ENCODE measurements at regions of chrX and their contacts with region 1.

Region 1: GRCh38 chrX:101287402-101287801 is 3.7 kb downstream of the TAF7L start:
- DNase-seq: peak; percentile 71
- H3K4me3 Mint-ChIP-seq: no peak overlapping the region
- H3K27ac Mint-ChIP-seq: no peak overlapping the region
- H3K4me1 Mint-ChIP-seq: no peaks in the 10 kb centered on the region
- H3K27me3 Mint-ChIP-seq: peaks cover 4% of the 10 kb centered on the region

Region 2: DNA sequence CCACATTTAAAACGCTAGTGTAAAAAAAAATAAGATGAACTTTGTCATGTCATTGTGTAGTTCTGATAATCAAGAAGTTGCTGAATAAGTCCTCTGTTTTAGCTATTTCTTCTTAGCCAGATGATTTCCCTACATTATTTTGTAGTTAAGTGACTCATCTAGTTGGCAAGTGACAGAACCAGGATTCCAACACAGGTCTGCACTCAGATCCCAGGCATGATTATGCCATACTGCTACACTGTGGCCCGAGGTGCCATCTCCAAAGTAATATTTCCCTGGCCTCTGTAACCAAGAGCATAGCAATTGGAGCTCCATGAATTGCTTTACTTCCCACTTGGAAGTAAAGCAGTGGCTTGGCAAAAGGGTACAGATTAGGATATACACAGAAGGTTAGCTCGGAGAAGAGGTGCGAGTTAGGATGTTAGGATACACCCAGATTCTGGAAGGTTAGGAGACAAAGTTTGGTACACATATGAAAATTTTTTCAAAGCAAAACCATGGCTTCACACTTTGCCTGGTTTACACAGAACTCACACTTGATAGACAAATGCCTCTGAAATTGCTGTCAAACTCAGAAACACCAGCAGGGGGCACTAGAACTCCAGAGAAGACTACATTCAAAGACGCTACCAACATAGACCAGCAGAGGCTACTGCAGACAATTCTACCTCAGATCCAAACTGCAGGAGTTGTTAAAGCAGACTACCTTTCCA is 602.0 kb before region 1 on chrX:
- intact Hi-C with region 1: loop called (anchors 5 kb)
- DNase-seq: peak; percentile 87
- H3K4me3 Mint-ChIP-seq: no peak overlapping the region
- H3K27ac Mint-ChIP-seq: no peak overlapping the region
- H3K4me1 Mint-ChIP-seq: peaks cover 8% of the 10 kb centered on the region
- H3K27me3 Mint-ChIP-seq: peaks cover 5% of the 10 kb centered on the region

Region 3: DNA sequence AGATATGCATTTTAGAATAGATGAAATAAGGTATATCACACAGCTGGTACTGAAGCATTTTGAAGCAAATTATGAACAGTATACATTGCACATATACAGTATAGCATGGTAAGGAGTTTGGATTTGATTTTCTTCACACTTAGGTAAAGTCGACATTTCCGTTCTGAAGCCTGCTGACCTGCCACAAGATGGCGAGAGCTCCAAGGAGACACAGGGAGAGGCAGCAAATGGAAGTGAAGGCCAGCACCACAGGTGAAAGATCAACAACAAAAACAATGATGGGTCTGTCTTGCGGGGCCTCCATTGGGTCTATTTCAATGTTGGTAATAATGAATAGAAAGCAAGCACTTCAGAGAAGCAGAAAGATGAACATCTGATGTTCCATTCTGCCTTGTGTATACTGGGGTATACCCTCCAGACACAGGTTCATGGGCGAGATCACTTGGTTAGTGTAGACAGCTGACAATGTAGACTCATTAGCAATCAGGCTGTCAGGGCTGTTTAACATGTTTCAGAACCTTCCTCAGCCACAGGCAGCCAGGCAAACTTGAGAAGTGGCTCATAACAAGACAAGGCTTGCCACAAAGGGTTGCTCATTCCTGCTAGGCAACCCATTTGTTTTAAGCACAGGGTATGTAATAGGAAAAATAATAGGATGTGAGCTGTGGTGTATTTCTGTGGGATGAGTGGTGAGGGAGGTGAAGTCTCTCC is 391.9 kb before region 1 on chrX:
- intact Hi-C with region 1: loop called (anchors 2 kb)
- DNase-seq: peak; percentile 66
- H3K4me3 Mint-ChIP-seq: no peak overlapping the region
- H3K27ac Mint-ChIP-seq: no peak overlapping the region
- H3K4me1 Mint-ChIP-seq: no peaks in the 10 kb centered on the region
- H3K27me3 Mint-ChIP-seq: no peaks in the 10 kb centered on the region

Region 4: GRCh38 chrX:101191217-101191750 is 96.1 kb before region 1 on chrX:
- intact Hi-C with region 1: no loop called
- DNase-seq: no peak
- H3K4me3 Mint-ChIP-seq: no peak overlapping the region
- H3K27ac Mint-ChIP-seq: no peak overlapping the region
- H3K4me1 Mint-ChIP-seq: no peaks in the 10 kb centered on the region
- H3K27me3 Mint-ChIP-seq: peaks cover 11% of the 10 kb centered on the region

Region 5: DNA sequence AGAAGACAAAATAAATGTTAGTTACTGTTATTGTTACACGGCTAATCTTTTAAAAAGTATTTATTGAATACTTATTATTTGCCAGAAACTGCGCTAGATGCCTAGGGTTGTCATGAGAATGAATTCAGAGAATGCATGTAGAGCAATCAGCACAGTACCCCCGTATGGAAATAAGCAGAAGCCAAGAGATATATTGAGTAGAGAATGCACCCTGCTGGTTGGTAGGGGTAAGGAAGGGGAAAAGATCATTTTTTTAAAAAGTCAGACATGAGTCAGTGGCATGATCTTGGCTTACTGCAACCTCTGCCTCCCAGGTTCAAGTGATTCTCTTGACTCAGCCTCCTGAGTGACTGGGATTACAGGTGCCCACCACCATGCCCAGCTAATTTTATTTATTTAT is 80.9 kb before region 1 on chrX:
- intact Hi-C with region 1: loop called (anchors 10 kb)
- DNase-seq: peak; percentile 56
- H3K4me3 Mint-ChIP-seq: no peak overlapping the region
- H3K27ac Mint-ChIP-seq: no peak overlapping the region
- H3K4me1 Mint-ChIP-seq: peaks cover 11% of the 10 kb centered on the region
- H3K27me3 Mint-ChIP-seq: no peaks in the 10 kb centered on the region

Measured in activated CD4-positive, alpha-beta T cell treated with anti-CD3 and anti-CD28 coated beads, Interleukin-2, amount 10 ng/mL, durations not matched to agents 24 days and 14 days (primary cell).